PC-9 (cell line): ENCODE measurements at regions of chr3 and their contacts with region 1.

Region 1: DNA sequence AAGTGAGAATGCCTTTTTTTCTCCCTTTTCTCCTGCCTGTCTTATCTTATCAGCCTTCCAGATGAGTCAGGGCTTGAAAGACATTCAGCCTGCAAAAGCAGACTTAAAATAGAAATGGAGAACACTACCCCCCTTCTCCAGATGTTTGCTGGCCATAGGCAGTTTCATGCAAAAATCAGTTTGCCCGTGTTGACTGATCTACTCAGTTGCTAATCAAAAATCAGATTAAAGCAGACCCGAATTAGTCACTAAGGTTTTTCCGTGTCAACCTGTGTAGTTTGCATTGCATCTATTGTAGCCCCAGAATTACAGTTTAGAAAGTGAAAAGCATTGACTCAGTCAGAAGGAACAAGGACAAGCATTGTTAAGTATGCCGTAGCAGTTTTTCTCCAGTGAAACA is 56.2 kb downstream of the IL5RA start:
- DNase-seq: no peak
- H3K4me3 ChIP-seq: no peak overlapping the region
- H3K27ac ChIP-seq: no peak overlapping the region
- H3K4me1 ChIP-seq: no peaks in the 10 kb centered on the region
- H3K27me3 ChIP-seq: peaks cover 13% of the 10 kb centered on the region; the same call in 1 of the 2 replicates
- CTCF ChIP-seq: no peak

Region 2: GRCh38 chr3:1908651-1909445 is 1145.1 kb before region 1 on chr3:
- CTCF ChIA-PET with region 1: no interaction called
- POLR2A ChIA-PET with region 1: no interaction called
- intact Hi-C with region 1: no loop called
- DNase-seq: no peak
- H3K4me3 ChIP-seq: no peak overlapping the region
- H3K27ac ChIP-seq: no peak overlapping the region
- H3K4me1 ChIP-seq: no peaks in the 10 kb centered on the region
- H3K27me3 ChIP-seq: no peaks in the 10 kb centered on the region
- CTCF ChIP-seq: no peak

Region 3: GRCh38 chr3:3509665-3510280 is 455.8 kb after region 1 on chr3:
- CTCF ChIA-PET with region 1: interaction called, 11 read pairs
- POLR2A ChIA-PET with region 1: no interaction called
- intact Hi-C with region 1: no loop called
- DNase-seq: no peak
- H3K4me3 ChIP-seq: no peak overlapping the region
- H3K27ac ChIP-seq: no peak overlapping the region
- H3K4me1 ChIP-seq: no peaks in the 10 kb centered on the region
- H3K27me3 ChIP-seq: no peaks in the 10 kb centered on the region
- CTCF ChIP-seq: no peak